Naive thymus-derived CD4-positive, alpha-beta T cell (primary cell): ENCODE measurements at regions of chr10 and their contacts with region 1.

Region 1: DNA sequence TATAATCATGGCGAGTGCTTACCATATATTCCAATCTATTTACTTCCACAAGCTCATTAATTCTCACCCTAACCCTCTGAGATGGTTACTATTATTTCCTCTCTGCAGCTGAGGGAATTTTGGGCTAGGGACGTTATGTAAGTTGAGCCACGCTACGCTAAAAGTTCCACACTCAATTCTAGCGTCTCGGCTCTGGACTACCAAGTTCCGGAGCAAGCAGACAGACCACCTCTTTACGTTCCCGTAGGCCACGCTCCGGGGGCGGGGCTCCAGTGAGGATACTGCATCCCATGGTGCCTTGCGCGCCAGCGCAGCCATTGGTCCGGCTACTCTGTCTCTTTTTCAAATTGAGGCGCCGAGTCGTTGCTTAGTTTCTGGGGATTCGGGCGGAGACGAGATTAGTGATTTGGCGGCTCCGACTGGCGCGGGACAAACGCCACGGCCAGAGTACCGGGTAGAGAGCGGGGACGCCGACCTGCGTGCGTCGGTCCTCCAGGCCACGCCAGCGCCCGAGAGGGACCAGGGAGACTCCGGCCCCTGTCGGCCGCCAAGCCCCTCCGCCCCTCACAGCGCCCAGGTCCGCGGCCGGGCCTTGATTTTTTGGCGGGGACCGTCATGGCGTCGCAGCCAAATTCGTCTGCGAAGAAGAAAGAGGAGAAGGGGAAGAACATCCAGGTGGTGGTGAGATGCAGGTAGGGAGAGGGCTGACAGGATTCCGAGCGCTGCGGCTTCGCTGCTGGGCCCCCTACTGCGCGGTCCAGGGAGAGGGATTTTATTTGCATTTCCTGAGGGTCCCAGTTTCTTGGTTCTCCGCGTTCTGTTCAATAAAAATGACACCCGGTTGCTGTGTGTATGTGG is at the start of gene KIF11:
- DNase-seq: peak; percentile 89 to 95 (median 94)
- ATAC-seq: peak; percentile 89
- H3K4me3 ChIP-seq: peak within 1 kb of the TSS; percentile 83
- H3K4me3 Mint-ChIP-seq: peak within 1 kb of the TSS; percentile 95 to 100 (median 99)
- H3K27ac ChIP-seq: peak within 1 kb of the TSS; percentile 96
- H3K27ac Mint-ChIP-seq: peak within 1 kb of the TSS; percentile 96 to 100 (median 100)
- H3K4me1 ChIP-seq: peaks cover 12 to 28% of the 10 kb centered on the region in 2 donors
- H3K4me1 Mint-ChIP-seq: peaks cover 9 to 54% (median 28%) of the 10 kb centered on the region in 7 donors
- H3K27me3 ChIP-seq: no peaks in the 10 kb centered on the region
- H3K27me3 Mint-ChIP-seq: peaks cover 0 to 5% (median 0%) of the 10 kb centered on the region in 5 donors
- total RNA-seq, gene KIF11: 0.32 to 52.6 (median 0.75) TPM

Region 2: GRCh38 chr10:91220194-91220953 is 1372.6 kb before region 1 on chr10 and contains the start of gene PCGF5:
- CTCF ChIA-PET with region 1: no interaction called
- POLR2A ChIA-PET with region 1: no interaction called
- intact Hi-C with region 1: loop called (anchors 5 kb)
- DNase-seq: peak; percentile 82 to 98 (median 90)
- ATAC-seq: peak; percentile 98
- H3K4me3 ChIP-seq: peak within 1 kb of the TSS; percentile 68
- H3K4me3 Mint-ChIP-seq: peak within 1 kb of the TSS; percentile 84 to 96 (median 90)
- H3K27ac ChIP-seq: peak within 1 kb of the TSS; percentile 90
- H3K27ac Mint-ChIP-seq: peak within 1 kb of the TSS; percentile 76 to 95 (median 89)
- H3K4me1 ChIP-seq: peaks cover 28 to 34% of the 10 kb centered on the region in 2 donors
- H3K4me1 Mint-ChIP-seq: peaks cover 33 to 69% (median 55%) of the 10 kb centered on the region in 7 donors
- H3K27me3 ChIP-seq: no peaks in the 10 kb centered on the region
- H3K27me3 Mint-ChIP-seq: no peaks in the 10 kb centered on the region
- total RNA-seq, gene PCGF5: 41.2 to 62.3 (median 57.4) TPM

Region 3: GRCh38 chr10:92240289-92241157 is 352.5 kb before region 1 on chr10:
- CTCF ChIA-PET with region 1: no interaction called
- POLR2A ChIA-PET with region 1: no interaction called
- intact Hi-C with region 1: loop called in 1 of 2 experiments (anchors 1 kb)
- DNase-seq: peak in 8 of 9 donors; percentile 19 to 43 (median 28)
- ATAC-seq: peak; percentile 58
- H3K4me3 ChIP-seq: peak overlapping the region; percentile 78
- H3K4me3 Mint-ChIP-seq: peak overlapping the region; percentile 88 to 99 (median 92)
- H3K27ac ChIP-seq: peak overlapping the region; percentile 58
- H3K27ac Mint-ChIP-seq: peak overlapping the region; percentile 31 to 94 (median 71)
- H3K4me1 ChIP-seq: peaks cover 0 to 11% of the 10 kb centered on the region in 2 donors
- H3K4me1 Mint-ChIP-seq: peaks cover 14 to 57% (median 31%) of the 10 kb centered on the region in 7 donors
- H3K27me3 ChIP-seq: no peaks in the 10 kb centered on the region
- H3K27me3 Mint-ChIP-seq: peaks cover 0 to 37% (median 0%) of the 10 kb centered on the region in 5 donors

Region 4: DNA sequence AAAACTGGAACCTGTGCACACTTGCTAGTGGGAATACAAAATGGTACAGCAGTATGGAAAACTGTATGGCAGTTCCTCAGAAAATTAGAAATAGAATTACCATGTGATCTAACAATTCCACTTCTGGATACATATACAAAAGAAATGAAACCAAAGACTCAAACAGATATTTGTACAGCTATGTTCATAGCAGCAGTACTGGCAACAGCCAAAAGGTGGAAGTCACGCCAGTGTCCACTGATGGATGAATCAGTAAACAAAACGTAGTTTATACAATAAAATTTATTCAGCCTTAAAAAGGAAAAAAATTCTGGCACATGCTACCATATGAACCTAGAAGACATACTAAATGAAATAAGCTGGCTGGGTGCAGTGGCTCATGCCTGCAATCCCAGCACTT is 42.1 kb before region 1 on chr10:
- CTCF ChIA-PET with region 1: no interaction called
- POLR2A ChIA-PET with region 1: no interaction called
- intact Hi-C with region 1: no loop called
- DNase-seq: no peak
- ATAC-seq: no peak
- H3K4me3 ChIP-seq: no peak overlapping the region
- H3K4me3 Mint-ChIP-seq: no peak overlapping the region
- H3K27ac ChIP-seq: no peak overlapping the region
- H3K27ac Mint-ChIP-seq: no peak overlapping the region
- H3K4me1 ChIP-seq: no peaks in the 10 kb centered on the region
- H3K4me1 Mint-ChIP-seq: peaks cover 0 to 12% (median 5%) of the 10 kb centered on the region in 7 donors
- H3K27me3 ChIP-seq: no peaks in the 10 kb centered on the region
- H3K27me3 Mint-ChIP-seq: no peaks in the 10 kb centered on the region

Region 5: GRCh38 chr10:92573798-92574547 is 19.0 kb before region 1 on chr10 and contains the start of gene IDE:
- CTCF ChIA-PET with region 1: interaction called, 21 read pairs
- POLR2A ChIA-PET with region 1: interaction called, 78 read pairs
- intact Hi-C with region 1: loop called (anchors 1 kb)
- DNase-seq: peak; percentile 70 to 89 (median 77)
- ATAC-seq: peak; percentile 88
- H3K4me3 ChIP-seq: peak within 1 kb of the TSS; percentile 90
- H3K4me3 Mint-ChIP-seq: peak within 1 kb of the TSS; percentile 78 to 94 (median 88)
- H3K27ac ChIP-seq: peak within 1 kb of the TSS; percentile 83
- H3K27ac Mint-ChIP-seq: peak within 1 kb of the TSS; percentile 78 to 95 (median 89)
- H3K4me1 ChIP-seq: peaks cover 12 to 14% of the 10 kb centered on the region in 2 donors
- H3K4me1 Mint-ChIP-seq: peaks cover 27 to 39% (median 38%) of the 10 kb centered on the region in 7 donors
- H3K27me3 ChIP-seq: no peaks in the 10 kb centered on the region
- H3K27me3 Mint-ChIP-seq: no peaks in the 10 kb centered on the region
- total RNA-seq, gene IDE: 20.7 to 36.7 (median 28.4) TPM

Region 6: DNA sequence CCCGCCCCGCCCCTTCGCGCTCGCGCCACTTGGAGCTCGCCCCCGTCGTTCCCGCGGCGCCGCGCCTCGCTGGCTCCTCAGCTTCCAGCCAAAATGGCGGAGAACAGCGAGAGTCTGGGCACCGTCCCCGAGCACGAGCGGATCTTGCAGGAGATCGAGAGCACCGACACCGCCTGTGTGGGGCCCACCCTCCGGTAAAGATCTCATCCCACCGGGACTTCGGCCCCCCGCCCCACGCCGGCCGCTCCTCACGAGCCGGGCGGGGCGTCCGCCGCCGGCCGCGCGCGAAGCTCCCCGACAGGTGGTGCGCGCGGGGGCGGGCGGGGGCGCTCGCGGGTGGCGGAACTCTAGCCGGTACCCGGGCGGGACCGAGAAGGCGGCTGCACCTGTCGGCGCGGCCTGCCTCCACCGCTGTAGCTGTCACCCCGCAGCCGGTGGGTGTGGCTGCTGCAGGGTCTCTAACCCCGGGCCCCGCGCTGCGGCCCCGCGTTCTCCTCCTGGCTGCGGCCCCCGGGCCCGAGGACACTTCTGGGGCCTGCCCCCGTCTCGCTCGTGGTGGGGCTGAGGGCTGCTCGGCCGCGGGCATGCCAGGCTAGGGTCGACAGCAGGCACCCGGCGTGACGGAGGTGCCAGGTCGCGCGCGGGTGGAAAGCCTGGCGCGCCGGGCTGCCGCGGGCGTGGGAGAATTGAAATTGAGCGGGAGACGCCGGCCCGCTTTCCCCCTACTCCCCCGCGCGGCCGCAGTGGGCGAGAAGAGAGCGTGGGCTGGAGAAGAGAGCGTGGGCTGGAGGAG is 255.6 kb after region 1 on chr10 and contains the start of gene EXOC6:
- CTCF ChIA-PET with region 1: no interaction called
- POLR2A ChIA-PET with region 1: interaction called, 13 read pairs
- intact Hi-C with region 1: loop called (anchors 1 kb)
- DNase-seq: peak; percentile 78 to 93 (median 91)
- ATAC-seq: peak; percentile 91
- H3K4me3 ChIP-seq: peak within 1 kb of the TSS; percentile 70
- H3K4me3 Mint-ChIP-seq: peak within 1 kb of the TSS; percentile 81 to 94 (median 91)
- H3K27ac ChIP-seq: peak within 1 kb of the TSS; percentile 95
- H3K27ac Mint-ChIP-seq: peak within 1 kb of the TSS; percentile 56 to 95 (median 92)
- H3K4me1 ChIP-seq: peaks cover 7 to 19% of the 10 kb centered on the region in 2 donors
- H3K4me1 Mint-ChIP-seq: peaks cover 4 to 48% (median 36%) of the 10 kb centered on the region in 7 donors
- H3K27me3 ChIP-seq: no peaks in the 10 kb centered on the region
- H3K27me3 Mint-ChIP-seq: no peaks in the 10 kb centered on the region
- total RNA-seq, gene EXOC6: 8.1 to 12.1 (median 11.4) TPM

Region 7: GRCh38 chr10:94362360-94363250 is 1769.6 kb after region 1 on chr10 and contains the start of gene NOC3L:
- CTCF ChIA-PET with region 1: no interaction called
- POLR2A ChIA-PET with region 1: no interaction called
- intact Hi-C with region 1: loop called in 1 of 2 experiments (anchors 5 kb)
- DNase-seq: peak; percentile 85 to 96 (median 91)
- ATAC-seq: peak; percentile 97
- H3K4me3 ChIP-seq: peak within 1 kb of the TSS; percentile 76
- H3K4me3 Mint-ChIP-seq: peak within 1 kb of the TSS; percentile 93 to 98 (median 96)
- H3K27ac ChIP-seq: peak within 1 kb of the TSS; percentile 92
- H3K27ac Mint-ChIP-seq: peak within 1 kb of the TSS; percentile 90 to 99 (median 97)
- H3K4me1 ChIP-seq: peaks cover 13 to 18% of the 10 kb centered on the region in 2 donors
- H3K4me1 Mint-ChIP-seq: peaks cover 20 to 54% (median 42%) of the 10 kb centered on the region in 7 donors
- H3K27me3 ChIP-seq: no peaks in the 10 kb centered on the region
- H3K27me3 Mint-ChIP-seq: peaks cover 0 to 14% (median 9%) of the 10 kb centered on the region in 5 donors
- total RNA-seq, gene NOC3L: 8.6 to 28.8 (median 24.8) TPM